ENCODE measurements at regions of chr12 and their contacts with region 1.

Region 1: DNA sequence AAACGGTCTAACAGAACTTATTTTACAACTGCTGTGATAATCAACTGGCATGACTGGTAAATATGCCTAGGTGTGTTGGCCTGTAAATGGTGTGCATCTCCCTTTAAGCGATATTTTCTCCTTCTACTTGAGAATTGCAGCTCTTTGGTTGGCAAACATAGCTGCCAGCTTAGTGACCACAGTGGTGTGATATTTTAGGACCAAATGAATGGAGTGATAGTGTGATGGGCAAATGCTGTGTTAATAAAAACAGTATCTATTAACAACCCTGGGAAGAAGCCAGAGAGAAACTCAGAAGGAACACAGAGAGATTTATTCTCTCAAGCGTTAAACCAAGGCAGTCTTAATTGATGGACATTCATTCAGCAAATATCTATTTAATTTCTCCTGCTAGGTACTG is 278.4 kb downstream of the AACS start:
- DNase-seq: no peak

Region 2: GRCh38 chr12:125272383-125272933 is 71.2 kb before region 1 on chr12:
- CTCF ChIA-PET with region 1: no interaction called
- POLR2A ChIA-PET with region 1: no interaction called
- DNase-seq: no peak

Region 3: DNA sequence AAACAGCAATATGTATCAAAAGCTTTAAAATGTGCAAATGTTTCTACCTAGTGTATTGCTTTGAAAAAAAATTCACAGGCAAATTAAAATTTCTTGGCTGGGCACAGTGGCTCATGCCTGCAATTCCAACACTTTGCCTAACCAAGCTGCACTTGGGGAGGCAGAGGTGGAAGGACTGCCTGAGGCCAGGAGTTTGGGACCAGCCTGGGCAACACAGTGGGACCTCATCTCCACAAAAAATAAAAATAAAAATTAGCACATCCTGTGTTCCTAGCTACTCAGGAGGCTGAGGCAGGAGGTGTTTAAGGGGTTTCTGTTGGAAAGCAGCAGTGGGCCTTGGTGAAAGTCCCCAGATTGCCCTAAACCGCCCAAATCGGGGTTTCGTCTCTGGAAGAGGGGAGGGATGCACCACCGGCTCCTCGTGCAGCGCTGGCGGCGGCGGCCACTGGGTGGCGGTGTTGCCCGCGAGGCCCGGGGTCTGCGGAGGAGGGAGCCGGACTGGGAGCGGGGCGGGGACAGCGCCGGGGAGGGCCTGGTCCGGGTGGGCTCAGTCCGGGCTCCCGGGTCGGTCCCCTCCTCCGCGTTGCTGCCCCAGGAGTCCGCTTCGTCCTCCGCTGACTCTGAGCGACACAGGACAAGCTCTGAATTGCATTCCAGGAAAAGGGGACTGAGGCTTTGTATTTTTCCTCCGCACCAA is 12.9 kb before region 1 on chr12:
- CTCF ChIA-PET with region 1: interaction called, 11 read pairs
- POLR2A ChIA-PET with region 1: interaction called, 3 read pairs
- DNase-seq: peak; percentile 85

Measured in HEK293T (cell line).